Heart left ventricle (tissue), 16 donors: ENCODE measurements at regions of chr6 and their contacts with region 1.

Region 1: GRCh38 chr6:13328076-13328874 is at the start of gene TBC1D7:
- DNase-seq: peak; percentile 92 to 97 (median 94)
- ATAC-seq: peak; percentile 72 to 97 (median 96)
- H3K4me3 ChIP-seq: peak within 1 kb of the TSS; percentile 53 to 94 (median 86)
- H3K27ac ChIP-seq: peak within 1 kb of the TSS; percentile 75 to 97 (median 94)
- H3K4me1 ChIP-seq: peaks cover 0 to 43% (median 18%) of the 10 kb centered on the region in 12 donors
- H3K27me3 ChIP-seq: no peaks in the 10 kb centered on the region
- CTCF ChIP-seq: peak in 4 of 12 donors; percentile 5 to 23 (median 12)
- POLR2A ChIP-seq: peak in 1 of 2 donors; percentile 93
- total RNA-seq, gene TBC1D7: 17.0 to 31.9 (median 22.9) TPM

Region 2: DNA sequence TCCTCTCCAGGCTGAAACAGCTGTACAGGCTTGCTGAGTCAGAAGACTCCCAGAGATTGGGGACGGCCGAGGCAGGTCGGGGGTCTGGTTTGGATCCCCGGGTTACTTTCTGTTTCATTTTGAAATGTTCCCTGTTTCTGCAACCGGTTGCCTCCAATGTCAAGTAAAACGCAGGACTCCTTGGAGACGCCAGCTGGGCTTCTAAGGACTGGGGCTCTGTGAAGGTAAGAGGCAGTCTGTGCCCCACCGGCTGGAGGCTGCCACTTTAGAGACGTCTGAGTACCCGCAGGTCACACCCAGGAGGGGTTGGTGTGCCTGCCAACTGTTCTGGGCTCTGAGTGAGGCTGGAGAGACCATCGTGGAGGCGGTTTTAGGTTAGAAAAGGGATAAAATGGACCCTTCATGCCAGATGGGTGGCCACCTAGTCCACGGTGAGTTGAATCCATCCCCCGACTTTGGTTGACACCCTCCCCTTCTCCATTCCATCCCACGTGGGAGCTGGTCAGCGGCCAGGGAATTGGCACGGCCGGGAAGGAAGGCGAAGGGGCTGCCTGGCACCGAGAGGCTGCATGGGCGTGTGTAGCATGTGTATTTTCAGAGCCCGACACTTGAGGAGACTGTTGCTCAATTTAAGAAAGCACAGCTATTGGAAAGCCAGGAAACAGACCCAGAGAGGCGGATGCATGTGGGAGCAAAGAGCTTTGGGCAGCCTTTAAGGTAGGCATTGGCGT is 370.8 kb before region 1 on chr6:
- intact Hi-C with region 1: loop called in 3 of 10 experiments (anchors 5 kb)
- DNase-seq: peak; percentile 69 to 87 (median 78)
- ATAC-seq: peak; percentile 79 to 89 (median 86)
- H3K4me3 ChIP-seq: peak overlapping the region; percentile 40 to 79 (median 66)
- H3K27ac ChIP-seq: peak overlapping the region; percentile 1 to 91 (median 78)
- H3K4me1 ChIP-seq: peaks cover 0 to 38% (median 14%) of the 10 kb centered on the region in 12 donors
- H3K27me3 ChIP-seq: no peaks in the 10 kb centered on the region
- CTCF ChIP-seq: peak in 5 of 12 donors; percentile 19 to 50 (median 37)
- POLR2A ChIP-seq: no peak

Region 3: DNA sequence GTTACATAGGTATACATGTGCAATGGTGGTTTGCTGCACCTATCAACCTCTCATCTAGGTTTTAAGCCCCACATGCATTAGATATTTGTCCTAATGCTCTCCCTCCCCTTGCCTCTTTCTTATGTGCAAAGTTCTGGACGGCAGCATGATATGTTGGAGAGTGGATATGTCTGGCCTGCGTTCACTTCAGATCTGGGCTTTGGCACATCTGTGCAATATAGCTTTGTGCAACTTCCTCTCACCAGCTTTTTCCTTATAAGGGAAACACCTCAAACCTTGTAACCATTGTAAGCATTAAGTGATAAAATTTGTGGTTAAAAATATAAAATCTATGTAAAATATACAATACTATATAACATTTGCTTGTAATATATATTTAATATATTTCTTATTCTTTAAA is 323.7 kb before region 1 on chr6:
- intact Hi-C with region 1: no loop called
- DNase-seq: no peak
- ATAC-seq: no peak
- H3K4me3 ChIP-seq: no peak overlapping the region
- H3K27ac ChIP-seq: peak overlapping the region in 2 of 12 donors; percentile 25 to 72
- H3K4me1 ChIP-seq: peaks cover 0 to 34% (median 12%) of the 10 kb centered on the region in 12 donors
- H3K27me3 ChIP-seq: no peaks in the 10 kb centered on the region
- CTCF ChIP-seq: no peak
- POLR2A ChIP-seq: no peak

Region 4: DNA sequence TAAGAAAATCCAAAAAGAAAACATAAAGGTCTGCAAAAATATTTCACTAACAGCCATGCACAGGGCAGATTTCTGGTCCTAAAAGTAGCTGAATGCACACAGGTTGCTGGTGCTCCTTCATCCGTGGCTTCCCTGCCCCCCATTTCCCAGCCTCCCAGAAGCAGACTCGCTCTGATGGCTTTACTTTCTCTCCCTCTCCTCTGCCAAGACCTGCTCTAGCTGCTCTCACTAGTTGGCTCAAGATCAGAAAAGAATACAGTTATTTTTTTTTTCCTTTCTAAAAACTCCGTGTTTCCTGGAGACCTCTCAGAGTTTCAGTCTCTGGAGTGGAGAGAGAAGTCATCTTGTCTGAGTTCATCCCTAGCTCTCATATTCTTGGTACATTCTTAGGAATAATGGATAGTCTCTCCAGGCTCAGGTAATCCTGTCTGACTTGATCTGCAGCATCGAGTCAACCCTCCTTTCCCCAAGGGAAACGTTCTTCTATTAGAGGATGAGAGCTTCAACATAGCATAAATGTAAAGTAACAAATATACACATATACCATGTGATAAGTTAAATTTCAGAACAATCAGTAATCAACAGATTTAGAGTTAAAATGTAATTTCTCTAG is 214.2 kb before region 1 on chr6:
- intact Hi-C with region 1: no loop called
- DNase-seq: no peak
- ATAC-seq: peak in 3 of 4 donors; percentile 48 to 75 (median 75)
- H3K4me3 ChIP-seq: no peak overlapping the region
- H3K27ac ChIP-seq: no peak overlapping the region
- H3K4me1 ChIP-seq: peaks cover 0 to 39% (median 13%) of the 10 kb centered on the region in 12 donors
- H3K27me3 ChIP-seq: no peaks in the 10 kb centered on the region
- CTCF ChIP-seq: no peak
- POLR2A ChIP-seq: no peak

Region 5: GRCh38 chr6:13194852-13195251 is 133.4 kb before region 1 on chr6:
- intact Hi-C with region 1: loop called in 5 of 10 experiments (anchors 5 to 10 kb)
- DNase-seq: peak in 3 of 5 donors; percentile 14 to 54 (median 40)
- ATAC-seq: peak in 1 of 4 donors; percentile 43
- H3K4me3 ChIP-seq: no peak overlapping the region
- H3K27ac ChIP-seq: no peak overlapping the region
- H3K4me1 ChIP-seq: peaks cover 0 to 8% (median 0%) of the 10 kb centered on the region in 12 donors
- H3K27me3 ChIP-seq: no peaks in the 10 kb centered on the region
- CTCF ChIP-seq: peak; percentile 21 to 60 (median 39)
- POLR2A ChIP-seq: no peak

Region 6: GRCh38 chr6:13574149-13574570 is 245.9 kb after region 1 on chr6:
- intact Hi-C with region 1: loop called in 1 of 10 experiments (anchors 2 kb)
- DNase-seq: peak; percentile 94 to 96 (median 95)
- ATAC-seq: peak; percentile 96 to 97 (median 96)
- H3K4me3 ChIP-seq: peak overlapping the region; percentile 30 to 93 (median 85)
- H3K27ac ChIP-seq: peak overlapping the region; percentile 93 to 100 (median 98)
- H3K4me1 ChIP-seq: peaks cover 0 to 31% (median 15%) of the 10 kb centered on the region in 12 donors
- H3K27me3 ChIP-seq: no peaks in the 10 kb centered on the region
- CTCF ChIP-seq: peak; percentile 31 to 73 (median 50)
- POLR2A ChIP-seq: no peak

Region 7: DNA sequence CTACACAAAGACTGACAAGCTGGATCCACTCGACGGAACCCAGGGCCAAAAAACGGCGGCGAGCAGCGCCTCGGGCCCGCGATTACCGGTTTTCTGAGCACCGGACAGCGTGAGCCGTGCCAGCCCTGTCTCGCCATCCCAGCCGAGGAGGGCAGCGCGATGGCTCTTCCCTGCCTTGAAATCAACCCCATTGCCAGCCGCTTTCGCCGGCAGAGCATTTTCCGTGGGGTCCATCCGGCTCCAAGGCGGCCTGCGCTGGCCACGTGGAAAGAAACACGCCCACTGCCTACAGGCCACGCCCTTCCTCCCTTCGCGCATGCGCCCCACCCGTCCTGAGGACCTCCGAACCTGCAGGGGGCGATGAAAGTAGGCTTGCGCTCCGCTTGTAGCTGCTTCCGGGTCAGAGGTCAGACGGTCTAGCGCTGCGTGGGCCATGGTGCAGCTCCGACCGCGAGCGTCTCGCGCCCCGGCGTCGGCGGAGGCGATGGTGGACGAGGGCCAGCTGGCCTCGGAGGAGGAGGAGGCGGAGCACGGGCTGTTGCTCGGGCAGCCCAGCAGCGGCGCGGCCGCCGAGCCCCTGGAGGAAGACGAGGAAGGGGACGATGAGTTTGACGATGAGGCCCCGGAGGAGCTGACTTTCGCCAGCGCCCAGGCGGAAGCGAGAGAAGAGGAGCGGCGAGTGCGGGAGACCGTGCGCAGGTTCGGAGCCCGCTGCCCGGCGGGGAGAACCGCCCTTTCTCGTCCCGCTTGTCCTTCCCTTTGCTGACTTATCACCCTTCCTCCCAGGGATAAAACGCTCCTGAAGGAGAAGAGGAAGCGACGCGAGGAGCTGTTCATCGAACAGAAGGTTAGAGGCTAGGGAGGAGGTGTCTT is 286.9 kb after region 1 on chr6 and contains the start of gene NOL7:
- intact Hi-C with region 1: loop called in 3 of 10 experiments (anchors 5 to 10 kb)
- DNase-seq: peak; percentile 98 to 99 (median 98)
- ATAC-seq: peak; percentile 96 to 98 (median 96)
- H3K4me3 ChIP-seq: peak within 1 kb of the TSS; percentile 66 to 96 (median 83)
- H3K27ac ChIP-seq: peak within 1 kb of the TSS; percentile 75 to 94 (median 89)
- H3K4me1 ChIP-seq: peaks cover 3 to 48% (median 27%) of the 10 kb centered on the region in 12 donors
- H3K27me3 ChIP-seq: no peaks in the 10 kb centered on the region
- CTCF ChIP-seq: peak; percentile 83 to 99 (median 92)
- POLR2A ChIP-seq: peak in 1 of 2 donors; percentile 72
- total RNA-seq, gene NOL7: 38.6 to 118 (median 47.8) TPM

Region 8: DNA sequence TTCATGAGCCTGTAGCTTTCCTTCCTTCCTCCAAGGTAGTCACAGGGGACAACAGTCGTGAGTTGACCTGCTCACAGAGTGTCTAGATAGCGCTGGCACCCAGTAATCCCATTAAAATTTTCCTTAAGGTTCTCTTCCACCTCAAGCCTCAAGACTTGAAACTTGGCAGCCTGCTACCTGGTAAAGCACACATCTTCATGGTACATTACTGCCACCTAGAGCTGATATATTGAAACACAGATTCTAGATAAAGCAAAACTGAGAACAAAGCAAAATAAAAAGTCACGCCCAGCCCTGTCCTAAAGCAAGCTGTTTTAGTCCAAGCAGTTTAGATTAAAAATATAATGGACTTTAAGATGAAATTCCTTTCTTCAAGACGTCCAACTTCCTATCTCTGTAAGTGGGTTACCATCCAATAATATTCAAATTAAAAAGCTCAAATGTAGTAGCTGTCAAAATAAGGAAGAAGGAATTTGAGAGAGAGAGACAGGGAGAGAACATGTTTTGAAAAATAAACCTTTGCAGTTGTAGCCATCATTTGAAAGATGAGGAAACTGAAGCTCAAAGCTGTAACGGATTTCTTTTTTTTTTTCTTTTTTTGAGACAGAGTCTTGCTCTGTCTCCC is 738.6 kb after region 1 on chr6:
- intact Hi-C with region 1: loop called in 1 of 10 experiments (anchors 5 kb)
- DNase-seq: no peak
- ATAC-seq: peak; percentile 32 to 84 (median 75)
- H3K4me3 ChIP-seq: no peak overlapping the region
- H3K27ac ChIP-seq: no peak overlapping the region
- H3K4me1 ChIP-seq: peaks cover 0 to 7% (median 0%) of the 10 kb centered on the region in 12 donors
- H3K27me3 ChIP-seq: peaks cover 0 to 4% (median 0%) of the 10 kb centered on the region in 9 donors
- CTCF ChIP-seq: peak; percentile 49 to 78 (median 66)
- POLR2A ChIP-seq: no peak